ENCODE measurements at regions of chr2 and their contacts with region 1.

Region 1: GRCh38 chr2:45935791-45936622 is 284.5 kb downstream of the PRKCE start:
- DNase-seq: peak; percentile 37
- H3K4me3 ChIP-seq: no peak overlapping the region
- H3K27ac ChIP-seq: peak overlapping the region in 3 of 4 donors; percentile 55 to 73 (median 64)
- H3K4me1 ChIP-seq: peaks cover 4 to 45% (median 13%) of the 10 kb centered on the region in 3 donors
- H3K27me3 ChIP-seq: no peaks in the 10 kb centered on the region
- CTCF ChIP-seq: peak; percentile 69 to 89 (median 84)
- POLR2A ChIP-seq: no peak

Region 2: GRCh38 chr2:45643543-45644542 is 292.2 kb before region 1 on chr2:
- intact Hi-C with region 1: loop called (anchors 2 kb)
- DNase-seq: no peak
- H3K4me3 ChIP-seq: peak overlapping the region; percentile 32 to 75 (median 54)
- H3K27ac ChIP-seq: peak overlapping the region in 1 of 4 donors; percentile 45
- H3K4me1 ChIP-seq: peaks cover 5 to 26% (median 10%) of the 10 kb centered on the region in 3 donors
- H3K27me3 ChIP-seq: peaks cover 0 to 18% (median 0%) of the 10 kb centered on the region in 4 donors
- CTCF ChIP-seq: peak; percentile 95 to 100 (median 99)
- POLR2A ChIP-seq: no peak

Region 3: DNA sequence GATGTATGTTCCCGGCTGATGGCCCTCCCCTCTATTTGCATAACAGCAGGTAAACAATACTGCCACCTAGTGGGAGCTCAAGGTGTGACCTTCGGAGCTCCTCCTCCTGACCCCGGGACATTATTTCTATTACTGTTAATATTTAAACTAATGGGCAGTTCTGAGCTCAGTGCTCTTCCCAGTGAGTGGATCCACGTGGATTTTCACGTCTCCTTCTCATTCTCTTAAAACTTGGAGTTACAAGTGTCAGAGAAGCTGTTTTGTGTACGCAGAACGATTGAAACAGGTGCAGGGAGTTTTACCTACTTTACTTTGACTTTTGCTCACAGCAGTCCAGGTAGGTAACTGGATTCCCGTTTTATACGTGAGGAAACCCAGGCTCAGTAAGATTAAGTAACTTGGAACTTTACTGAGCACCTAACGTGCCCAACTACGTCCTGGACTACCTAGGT is 157.3 kb before region 1 on chr2:
- intact Hi-C with region 1: no loop called
- DNase-seq: peak; percentile 4
- H3K4me3 ChIP-seq: no peak overlapping the region
- H3K27ac ChIP-seq: no peak overlapping the region
- H3K4me1 ChIP-seq: peaks cover 0 to 27% (median 0%) of the 10 kb centered on the region in 3 donors
- H3K27me3 ChIP-seq: no peaks in the 10 kb centered on the region
- CTCF ChIP-seq: peak; percentile 53 to 84 (median 82)
- POLR2A ChIP-seq: no peak

Region 4: DNA sequence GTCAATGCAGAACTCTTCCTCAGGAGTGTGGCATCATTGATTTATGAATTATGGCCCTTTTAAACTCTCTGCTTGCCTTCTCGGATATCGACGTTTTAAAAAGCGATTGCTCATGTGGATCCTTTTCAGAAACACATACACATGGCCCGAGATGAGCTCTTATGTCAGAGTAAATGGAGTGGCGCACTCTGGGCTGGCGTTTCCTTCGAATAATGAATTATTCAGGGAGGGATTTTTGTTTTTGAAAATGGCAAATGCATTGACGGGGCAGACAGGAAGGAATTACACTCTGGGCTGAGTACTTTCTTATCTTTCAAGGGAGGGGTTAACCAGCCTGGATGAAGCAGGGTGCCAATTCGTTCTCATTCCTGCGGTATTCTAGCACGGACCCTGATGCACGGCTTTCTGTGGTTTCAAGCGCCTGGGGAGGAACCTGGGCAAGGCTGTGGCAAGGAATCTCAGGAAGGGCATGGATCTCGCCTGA is 141.8 kb before region 1 on chr2:
- intact Hi-C with region 1: loop called (anchors 10 kb)
- DNase-seq: no peak
- H3K4me3 ChIP-seq: peak overlapping the region in 1 of 4 donors; percentile 18
- H3K27ac ChIP-seq: no peak overlapping the region
- H3K4me1 ChIP-seq: peaks cover 0 to 4% (median 0%) of the 10 kb centered on the region in 3 donors
- H3K27me3 ChIP-seq: no peaks in the 10 kb centered on the region
- CTCF ChIP-seq: no peak
- POLR2A ChIP-seq: no peak